AG04450 (cell line): ENCODE measurements at regions of chr12 and their contacts with region 1.

Region 1: DNA sequence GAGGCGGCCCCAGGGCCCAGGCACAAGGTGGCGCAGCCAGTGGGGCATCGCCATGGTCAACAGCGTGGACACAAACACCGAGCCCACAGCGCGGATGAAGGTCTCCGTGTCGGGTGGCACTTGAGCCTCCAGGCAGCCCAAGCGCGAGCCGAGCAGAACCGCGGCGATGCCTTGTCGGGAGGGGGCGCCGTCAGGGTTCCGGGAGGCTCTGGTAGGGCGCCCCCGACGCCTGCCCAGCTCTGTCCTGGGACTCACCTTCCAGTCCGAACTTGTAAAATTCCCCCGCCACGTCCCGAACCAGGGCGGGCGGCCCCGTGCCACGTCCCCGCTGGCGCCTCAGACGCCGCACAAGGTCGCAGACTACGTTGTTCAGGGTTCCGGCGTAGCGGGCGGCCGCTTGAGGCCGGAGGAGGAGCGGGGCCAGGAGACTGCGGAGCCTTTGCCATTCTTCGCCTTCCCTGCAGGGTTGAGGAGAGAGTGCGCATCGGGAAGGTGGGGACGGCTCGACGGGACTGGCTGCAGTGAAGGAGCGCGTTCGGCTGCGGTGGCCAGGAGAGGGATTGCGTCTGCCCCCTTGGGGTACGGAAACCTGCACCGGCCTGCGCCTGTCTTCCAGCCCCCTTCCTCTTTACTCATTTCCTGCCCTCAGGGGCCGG is 1.7 kb downstream of the CYP27B1 start:
- DNase-seq: no peak
- H3K4me3 ChIP-seq: peak overlapping the region; percentile 29
- H3K27ac ChIP-seq: no peak overlapping the region
- H3K27me3 ChIP-seq: peaks cover 40% of the 10 kb centered on the region
- CTCF ChIP-seq: peak; percentile 44

Region 2: GRCh38 chr12:57368349-57369095 is 396.6 kb before region 1 on chr12:
- CTCF ChIA-PET with region 1: no interaction called
- POLR2A ChIA-PET with region 1: no interaction called
- DNase-seq: no peak
- H3K4me3 ChIP-seq: no peak overlapping the region
- H3K27ac ChIP-seq: no peak overlapping the region
- H3K27me3 ChIP-seq: no peaks in the 10 kb centered on the region
- CTCF ChIP-seq: no peak

Region 3: GRCh38 chr12:57751788-57752667 is 13.1 kb before region 1 on chr12 and contains the start of gene CDK4:
- CTCF ChIA-PET with region 1: interaction called, 24 read pairs
- POLR2A ChIA-PET with region 1: interaction called, 4 read pairs
- DNase-seq: peak; percentile 100
- H3K4me3 ChIP-seq: peak within 1 kb of the TSS; percentile 91
- H3K27ac ChIP-seq: peak within 1 kb of the TSS; percentile 91
- H3K27me3 ChIP-seq: peaks cover 15% of the 10 kb centered on the region
- CTCF ChIP-seq: no peak
- polyA plus RNA-seq, gene CDK4: 251 and 288 TPM in 2 replicates

Region 4: DNA sequence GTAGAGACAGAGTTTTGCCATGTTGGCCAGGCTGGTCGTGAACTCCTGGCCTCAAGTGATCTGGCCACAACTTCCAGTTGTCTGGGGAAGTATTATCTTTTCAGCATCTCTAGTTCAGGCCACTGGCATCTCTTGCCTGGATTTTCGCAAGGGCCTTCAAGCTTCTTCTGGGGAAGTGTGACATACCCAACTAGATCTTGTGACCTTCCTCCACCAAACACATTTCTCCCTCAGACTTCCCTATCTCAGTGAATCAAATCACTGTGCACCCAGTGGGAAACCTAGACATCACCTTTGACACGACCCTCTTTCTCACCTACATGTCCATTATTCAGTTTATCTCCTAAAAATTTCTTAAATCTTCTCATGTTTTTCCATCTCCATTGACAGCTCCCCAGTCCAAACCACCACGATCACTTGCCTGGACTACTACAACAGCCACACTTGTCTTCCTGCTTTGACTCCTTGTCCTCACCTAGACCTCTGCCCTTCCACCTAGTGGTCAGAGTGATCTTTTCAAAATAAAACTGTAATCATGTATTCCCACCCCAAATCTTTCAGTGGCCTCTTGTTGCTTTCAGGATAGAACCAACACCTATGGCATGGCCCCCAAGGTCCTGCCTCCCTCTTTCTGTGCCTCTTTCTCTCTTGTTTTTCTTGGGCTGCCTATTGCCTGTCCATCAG is 10.5 kb after region 1 on chr12:
- CTCF ChIA-PET with region 1: no interaction called
- POLR2A ChIA-PET with region 1: no interaction called
- DNase-seq: no peak
- H3K4me3 ChIP-seq: no peak overlapping the region
- H3K27ac ChIP-seq: no peak overlapping the region
- H3K27me3 ChIP-seq: no peaks in the 10 kb centered on the region
- CTCF ChIP-seq: 0 out of 2 replicates have a peak, but pooled peaks have one; percentile 6

Region 5: GRCh38 chr12:57865090-57865751 is 100.1 kb after region 1 on chr12:
- CTCF ChIA-PET with region 1: no interaction called
- POLR2A ChIA-PET with region 1: no interaction called
- DNase-seq: no peak
- H3K4me3 ChIP-seq: peak overlapping the region; percentile 55
- H3K27ac ChIP-seq: peak overlapping the region; percentile 90
- H3K27me3 ChIP-seq: no peaks in the 10 kb centered on the region
- CTCF ChIP-seq: no peak